Activated CD4-positive, alpha-beta memory T cell treated with anti-CD3 and anti-CD28 coated beads for 36 hours (primary cell): ENCODE measurements at regions of chr3 and their contacts with region 1.

Region 1: DNA sequence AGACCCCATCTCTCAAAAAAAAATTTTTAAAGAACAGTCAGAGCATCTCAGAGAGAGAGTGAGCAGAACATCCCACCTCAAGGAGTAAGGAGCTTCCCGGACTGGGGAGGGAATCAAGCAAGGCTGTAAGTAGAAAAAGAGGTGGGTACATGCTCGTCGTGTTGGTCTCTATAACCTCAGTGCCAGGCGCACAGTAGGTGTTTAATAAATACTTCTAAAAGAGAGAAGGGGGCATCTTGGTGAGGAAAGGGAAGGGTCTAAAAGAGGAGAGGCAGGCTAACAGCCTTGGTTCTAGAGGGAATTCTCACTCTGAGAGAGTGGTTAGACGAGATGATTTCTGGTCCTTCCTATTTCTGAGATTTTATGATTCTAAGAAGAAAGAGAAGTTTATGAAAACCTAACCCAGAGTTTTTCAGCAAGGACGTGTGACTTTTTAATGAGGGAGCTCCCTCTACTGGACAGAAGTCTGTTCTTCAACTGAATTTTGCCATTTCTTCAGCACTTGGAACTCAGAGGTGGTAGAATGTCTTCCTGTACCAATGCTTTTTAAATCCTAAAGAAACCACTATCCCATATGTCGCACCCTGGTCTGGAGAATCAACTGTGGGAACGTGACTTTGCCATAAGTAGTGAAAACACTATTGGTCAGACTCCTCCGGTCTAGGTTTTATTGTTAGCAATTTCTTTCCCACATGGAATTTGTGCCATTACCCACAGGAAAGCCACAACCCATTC is 199.7 kb upstream of the LMCD1 start:
- DNase-seq: no peak
- H3K4me3 Mint-ChIP-seq: no peak overlapping the region
- H3K27ac Mint-ChIP-seq: no peak overlapping the region
- H3K4me1 Mint-ChIP-seq: no peaks in the 10 kb centered on the region
- H3K27me3 Mint-ChIP-seq: no peaks in the 10 kb centered on the region

Region 2: DNA sequence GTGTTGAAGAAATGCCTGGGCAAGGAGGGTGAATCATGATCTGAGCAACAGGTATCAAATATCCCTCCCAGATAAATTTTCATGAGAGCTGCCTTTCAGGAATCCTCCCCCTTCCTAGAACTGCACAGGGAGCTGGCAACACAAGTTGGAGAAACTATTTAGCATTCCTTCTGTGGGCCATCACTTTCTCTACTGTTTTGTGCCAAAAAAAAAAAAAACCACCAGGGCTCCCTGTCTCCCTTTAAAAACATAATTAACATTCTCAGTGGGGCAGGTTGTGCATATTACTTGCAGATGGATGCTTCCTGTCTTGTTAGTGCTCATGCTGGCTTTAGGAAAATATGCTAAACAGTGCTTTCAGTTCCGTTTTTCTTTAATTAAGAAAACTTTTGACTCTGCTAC is 35.2 kb before region 1 on chr3:
- CTCF ChIA-PET with region 1: no interaction called
- POLR2A ChIA-PET with region 1: no interaction called
- intact Hi-C with region 1: no loop called
- DNase-seq: no peak
- H3K4me3 Mint-ChIP-seq: no peak overlapping the region
- H3K27ac Mint-ChIP-seq: no peak overlapping the region
- H3K4me1 Mint-ChIP-seq: no peaks in the 10 kb centered on the region
- H3K27me3 Mint-ChIP-seq: no peaks in the 10 kb centered on the region

Region 3: GRCh38 chr3:8290611-8291010 is 11.3 kb before region 1 on chr3:
- CTCF ChIA-PET with region 1: interaction called, 14 read pairs
- POLR2A ChIA-PET with region 1: no interaction called
- intact Hi-C with region 1: no loop called
- DNase-seq: no peak
- H3K4me3 Mint-ChIP-seq: no peak overlapping the region
- H3K27ac Mint-ChIP-seq: no peak overlapping the region
- H3K4me1 Mint-ChIP-seq: no peaks in the 10 kb centered on the region
- H3K27me3 Mint-ChIP-seq: no peaks in the 10 kb centered on the region